ENCODE measurements at regions of chr13 and their contacts with region 1.

Region 1: DNA sequence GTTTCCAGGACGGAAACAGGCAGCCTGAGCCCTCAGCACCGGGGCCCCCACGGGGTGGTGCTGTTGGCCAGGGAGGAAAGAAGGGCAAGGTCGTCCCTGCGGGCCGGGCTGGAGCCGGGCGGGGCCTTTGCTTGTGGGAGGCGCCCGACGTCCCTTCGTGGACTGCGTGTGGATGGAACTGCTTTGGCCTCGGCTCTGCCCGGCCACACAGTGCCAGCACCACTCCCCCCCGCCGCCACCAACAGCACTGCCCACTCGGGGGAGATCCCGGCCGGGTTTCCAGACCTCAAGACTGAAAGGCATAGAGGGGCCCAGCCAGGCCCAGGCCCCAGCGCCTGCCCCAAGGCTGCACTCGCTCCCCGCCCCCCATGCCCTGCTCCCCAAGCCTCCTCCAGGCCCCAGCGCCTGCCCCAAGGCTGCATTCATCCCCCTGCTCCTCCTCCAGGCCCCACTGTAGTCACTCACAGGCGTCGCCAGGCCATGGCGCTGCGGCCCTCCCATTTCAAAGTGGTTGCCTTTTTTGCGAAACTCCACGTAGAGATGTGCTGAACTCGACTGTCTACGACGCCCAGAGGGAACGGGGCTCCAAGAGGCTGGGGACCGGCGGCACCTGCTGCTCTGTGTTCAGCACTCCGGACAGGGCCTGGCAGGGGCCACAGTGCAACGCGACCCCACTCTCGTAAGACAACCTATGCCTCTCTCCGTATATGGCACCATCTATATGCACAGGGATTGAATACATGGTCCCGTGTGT is 22.5 kb downstream of the C13orf46 start:
- DNase-seq: peak; percentile 78 to 95 (median 88)
- ATAC-seq: peak; percentile 81 to 96 (median 94)
- H3K4me3 ChIP-seq: no peak overlapping the region
- H3K27ac ChIP-seq: no peak overlapping the region
- H3K4me1 ChIP-seq: no peaks in the 10 kb centered on the region
- H3K27me3 ChIP-seq: no peaks in the 10 kb centered on the region
- CTCF ChIP-seq: peak; percentile 61 to 81 (median 68)

Region 2: GRCh38 chr13:113616281-113616906 is 335.0 kb before region 1 on chr13:
- intact Hi-C with region 1: no loop called
- DNase-seq: peak in 1 of 6 donors; percentile 10
- ATAC-seq: peak in 2 of 4 donors; percentile 23 to 63
- H3K4me3 ChIP-seq: no peak overlapping the region
- H3K27ac ChIP-seq: no peak overlapping the region
- H3K4me1 ChIP-seq: no peaks in the 10 kb centered on the region
- H3K27me3 ChIP-seq: no peaks in the 10 kb centered on the region
- CTCF ChIP-seq: no peak

Region 3: DNA sequence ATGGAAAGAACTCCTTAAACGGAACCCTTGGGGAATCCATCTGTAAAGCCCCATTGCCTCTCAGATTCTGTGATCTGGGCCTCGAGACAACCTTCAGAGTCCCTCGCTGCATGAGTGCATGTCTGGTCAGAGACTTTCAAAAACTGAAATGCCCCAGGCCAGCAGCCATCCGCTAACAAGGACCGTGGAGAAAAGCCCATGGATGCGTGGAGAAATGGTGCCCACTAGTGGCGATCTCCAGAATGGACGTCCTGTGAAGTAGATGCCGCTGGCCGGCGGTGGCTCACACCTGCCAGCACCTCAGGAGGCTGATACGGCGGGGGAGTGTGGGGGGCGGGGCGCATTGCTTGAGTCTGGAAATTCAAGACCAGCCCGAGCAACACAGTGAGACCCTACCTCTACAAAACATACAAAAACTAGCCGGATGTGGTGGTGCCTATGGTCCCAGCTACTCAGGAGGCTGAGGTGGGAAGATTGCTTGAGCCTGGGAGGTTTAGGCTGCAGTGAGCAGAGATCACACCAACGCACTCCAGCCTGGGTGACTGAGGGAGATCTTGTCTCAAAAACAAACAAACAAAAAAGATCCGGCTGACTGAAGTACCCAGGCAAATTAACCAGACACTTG is 275.4 kb after region 1 on chr13:
- intact Hi-C with region 1: loop called in 2 of 3 experiments (anchors 5 kb)
- DNase-seq: peak; percentile 80 to 94 (median 90)
- ATAC-seq: peak; percentile 89 to 96 (median 95)
- H3K4me3 ChIP-seq: no peak overlapping the region
- H3K27ac ChIP-seq: no peak overlapping the region
- H3K4me1 ChIP-seq: peaks cover 5 to 9% (median 9%) of the 10 kb centered on the region in 3 donors
- H3K27me3 ChIP-seq: no peaks in the 10 kb centered on the region
- CTCF ChIP-seq: peak; percentile 69 to 91 (median 82)

Measured in pancreas (tissue), 10 donors.